Endothelial cell of umbilical vein (primary cell): ENCODE measurements at regions of chr17 and their contacts with region 1.

Region 1: DNA sequence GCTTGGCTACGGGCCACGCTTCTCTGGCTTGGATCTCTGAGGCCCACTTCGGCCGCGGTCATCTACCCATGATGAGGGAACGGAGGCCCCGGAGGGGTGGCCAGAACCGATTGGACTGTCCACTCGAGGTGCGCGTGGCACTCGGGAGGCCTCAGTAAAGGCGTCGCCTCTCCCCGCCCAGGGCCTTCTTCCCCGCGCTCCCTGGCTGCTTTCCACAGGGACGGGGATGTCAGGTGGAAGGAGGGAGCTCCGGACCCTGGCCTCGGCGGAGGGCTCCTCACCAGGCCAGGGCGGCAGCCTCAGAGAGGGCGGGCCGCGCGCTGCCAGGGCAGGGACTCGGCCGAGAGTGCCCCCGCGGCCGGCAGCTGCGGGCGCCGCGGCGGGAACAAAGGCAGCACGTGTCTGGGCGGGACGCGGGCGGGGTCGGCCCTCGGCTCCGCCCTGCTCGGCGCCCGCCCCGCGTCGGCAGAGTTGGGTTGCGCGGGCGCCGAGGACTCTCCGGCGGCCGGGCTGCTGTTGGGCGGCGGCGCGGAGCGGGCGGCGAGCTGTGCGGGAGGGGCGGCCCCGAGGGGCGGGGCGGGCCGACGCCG is 587 bp upstream of the CDK5R1 start:
- DNase-seq: peak; percentile 70
- H3K4me3 ChIP-seq: peak overlapping the region in 1 of 3 experiments; percentile 47
- H3K27ac ChIP-seq: peak overlapping the region; percentile 50
- H3K4me1 ChIP-seq: peaks cover 6% of the 10 kb centered on the region
- H3K27me3 ChIP-seq: no peaks in the 10 kb centered on the region
- CTCF ChIP-seq: no peak
- POLR2A ChIP-seq: no peak

Region 2: GRCh38 chr17:32461853-32462617 is 24.2 kb before region 1 on chr17:
- CTCF ChIA-PET with region 1: interaction called, 41 read pairs
- POLR2A ChIA-PET with region 1: no interaction called
- dilution Hi-C with region 1: no loop called
- intact Hi-C with region 1: no loop called
- DNase-seq: peak; percentile 69
- H3K4me3 ChIP-seq: no peak overlapping the region
- H3K27ac ChIP-seq: no peak overlapping the region
- H3K4me1 ChIP-seq: no peaks in the 10 kb centered on the region
- H3K27me3 ChIP-seq: no peaks in the 10 kb centered on the region
- CTCF ChIP-seq: peak; percentile 59 to 67
- POLR2A ChIP-seq: no peak

Region 3: DNA sequence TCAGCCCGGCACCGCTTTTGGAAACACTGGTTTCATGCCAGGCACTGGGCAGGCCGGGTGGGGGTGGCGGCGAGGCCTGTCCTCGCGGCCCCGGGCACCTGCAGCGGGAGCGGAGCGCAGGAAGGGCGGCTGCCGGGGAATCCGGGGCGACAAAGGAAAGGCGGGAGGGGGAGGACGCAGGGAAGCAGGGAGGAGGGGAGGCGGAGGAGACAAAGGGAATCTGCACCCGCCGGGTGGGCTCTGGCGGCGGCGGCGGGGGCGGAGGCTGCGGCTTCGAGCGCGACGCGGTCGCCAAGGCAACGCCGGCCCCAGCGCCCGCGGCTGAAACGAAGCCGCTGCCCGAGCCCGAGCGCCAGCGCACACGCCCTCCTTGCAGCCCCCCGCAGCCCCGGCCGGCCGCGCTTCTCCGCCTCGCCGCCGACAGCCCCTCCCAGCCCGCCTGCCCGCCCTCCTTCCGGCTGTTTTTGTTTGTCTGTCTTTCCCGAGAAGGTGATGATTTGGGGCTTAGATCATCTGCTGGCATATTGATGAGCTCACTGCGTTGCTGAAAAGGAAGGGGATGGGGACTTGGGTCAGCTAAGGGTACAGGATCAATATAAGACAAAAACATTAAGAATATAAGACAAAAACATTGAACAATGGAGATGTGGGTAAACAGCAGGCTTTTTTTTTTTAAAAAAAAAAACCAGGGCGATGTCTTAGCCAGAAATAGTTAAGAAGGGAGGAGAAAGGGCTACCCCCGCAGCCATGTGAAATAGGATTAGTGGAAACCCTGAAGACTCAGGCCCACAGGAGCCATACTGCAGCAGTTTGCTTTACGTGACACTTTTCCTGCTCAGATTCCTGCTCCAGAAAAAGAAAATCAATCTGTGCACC is 33.3 kb after region 1 on chr17:
- CTCF ChIA-PET with region 1: no interaction called
- POLR2A ChIA-PET with region 1: no interaction called
- dilution Hi-C with region 1: no loop called
- intact Hi-C with region 1: loop called (anchors 1 kb)
- DNase-seq: peak; percentile 49
- H3K4me3 ChIP-seq: peak overlapping the region; percentile 6 to 50 (median 48)
- H3K27ac ChIP-seq: peak overlapping the region; percentile 66
- H3K4me1 ChIP-seq: peaks cover 19% of the 10 kb centered on the region
- H3K27me3 ChIP-seq: no peaks in the 10 kb centered on the region
- CTCF ChIP-seq: no peak
- POLR2A ChIP-seq: no peak

Region 4: GRCh38 chr17:32755045-32755805 is 269.0 kb after region 1 on chr17:
- CTCF ChIA-PET with region 1: interaction called, 37 read pairs
- POLR2A ChIA-PET with region 1: interaction called, 3 read pairs
- dilution Hi-C with region 1: no loop called
- intact Hi-C with region 1: loop called (anchors 1 kb)
- DNase-seq: peak; percentile 84
- H3K4me3 ChIP-seq: no peak overlapping the region
- H3K27ac ChIP-seq: no peak overlapping the region
- H3K4me1 ChIP-seq: no peaks in the 10 kb centered on the region
- H3K27me3 ChIP-seq: no peaks in the 10 kb centered on the region
- CTCF ChIP-seq: peak; percentile 26 to 37
- POLR2A ChIP-seq: no peak

Region 5: DNA sequence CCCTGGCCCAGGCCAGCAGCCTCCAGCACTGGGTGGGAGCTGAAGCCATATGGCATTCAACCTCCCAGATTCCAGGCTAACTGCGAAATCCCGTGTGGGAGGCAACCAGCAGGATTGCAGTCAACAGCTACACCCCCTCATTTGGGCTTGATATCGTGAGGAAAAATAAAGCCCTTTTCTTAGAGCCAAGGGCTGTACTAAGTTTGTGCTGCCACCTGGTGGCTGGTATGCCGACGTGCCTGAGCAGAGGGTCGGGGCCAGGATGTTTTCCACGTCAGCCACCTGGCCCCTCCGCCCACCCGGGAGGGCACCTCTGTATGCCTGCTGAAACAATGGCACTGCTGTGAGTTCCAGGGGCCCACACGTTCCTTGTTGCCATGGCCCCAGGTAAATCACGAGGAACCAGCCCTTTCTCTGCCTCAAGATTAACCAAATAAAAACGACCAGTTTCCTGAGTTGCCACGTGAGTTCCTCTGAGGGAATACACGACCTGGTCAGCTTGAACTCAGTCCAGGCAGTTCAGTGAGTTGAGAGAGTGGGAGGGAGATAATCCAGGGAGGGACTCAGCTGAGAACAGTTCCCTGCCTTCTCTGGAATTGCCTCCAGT is 450.8 kb after region 1 on chr17:
- CTCF ChIA-PET with region 1: interaction called, 3 read pairs
- POLR2A ChIA-PET with region 1: no interaction called
- dilution Hi-C with region 1: no loop called
- intact Hi-C with region 1: loop called (anchors 2 kb)
- DNase-seq: peak; percentile 90
- H3K4me3 ChIP-seq: no peak overlapping the region
- H3K27ac ChIP-seq: peak overlapping the region; percentile 61
- H3K4me1 ChIP-seq: peaks cover 10% of the 10 kb centered on the region
- H3K27me3 ChIP-seq: no peaks in the 10 kb centered on the region
- CTCF ChIP-seq: peak; percentile 88 to 89
- POLR2A ChIP-seq: no peak